Ascending aorta (tissue), 2 donors: ENCODE measurements at regions of chr1 and their contacts with region 1.

Region 1: DNA sequence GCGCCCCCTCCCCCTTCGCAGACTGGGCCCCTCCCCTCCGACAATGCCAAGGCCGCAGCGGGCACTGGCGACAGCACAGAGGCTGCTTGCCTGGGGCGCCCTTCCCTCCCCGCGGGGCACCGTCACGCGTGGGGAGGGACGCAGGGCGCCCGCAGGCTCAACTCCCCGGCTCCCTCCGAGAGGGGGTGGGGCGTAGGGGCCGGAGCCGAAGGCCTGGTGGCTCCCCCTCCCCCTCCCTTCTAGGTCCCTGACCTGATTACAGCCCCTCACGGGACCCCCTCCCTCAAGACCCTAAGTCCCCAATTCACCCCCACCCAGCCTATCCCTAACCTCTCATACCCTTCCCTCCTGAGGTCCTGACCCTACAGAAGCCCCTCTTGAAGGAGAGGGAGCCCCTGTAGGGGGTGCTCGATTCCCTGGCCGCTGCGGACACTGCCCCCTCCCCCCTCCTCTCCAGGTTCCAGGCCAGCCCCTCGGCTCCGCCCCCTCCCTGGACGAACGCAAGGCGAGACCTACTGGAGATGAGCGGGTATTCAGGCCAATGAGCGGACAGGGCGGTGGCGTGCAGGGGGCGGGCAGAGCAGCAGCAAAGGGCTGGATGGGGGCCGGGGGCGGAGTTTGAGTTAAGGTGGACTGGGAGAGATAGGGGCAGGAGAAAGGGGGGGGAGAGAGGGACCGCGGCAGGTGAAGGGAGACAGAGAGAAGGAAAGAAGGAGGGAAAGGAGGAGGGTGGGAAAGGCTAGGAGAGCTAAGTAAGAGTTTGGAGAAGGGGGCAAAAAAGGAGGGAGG is 733 bp upstream of the ZBTB7B start:
- DNase-seq: peak; percentile 99 to 100
- H3K4me3 ChIP-seq: peak overlapping the region; percentile 92 to 94
- H3K27ac ChIP-seq: peak overlapping the region; percentile 97 to 98
- H3K4me1 ChIP-seq: peaks cover 19 to 41% of the 10 kb centered on the region in 2 donors
- H3K27me3 ChIP-seq: no peaks in the 10 kb centered on the region
- CTCF ChIP-seq: peak in 2 of 3 experiments; percentile 50 to 59

Region 2: DNA sequence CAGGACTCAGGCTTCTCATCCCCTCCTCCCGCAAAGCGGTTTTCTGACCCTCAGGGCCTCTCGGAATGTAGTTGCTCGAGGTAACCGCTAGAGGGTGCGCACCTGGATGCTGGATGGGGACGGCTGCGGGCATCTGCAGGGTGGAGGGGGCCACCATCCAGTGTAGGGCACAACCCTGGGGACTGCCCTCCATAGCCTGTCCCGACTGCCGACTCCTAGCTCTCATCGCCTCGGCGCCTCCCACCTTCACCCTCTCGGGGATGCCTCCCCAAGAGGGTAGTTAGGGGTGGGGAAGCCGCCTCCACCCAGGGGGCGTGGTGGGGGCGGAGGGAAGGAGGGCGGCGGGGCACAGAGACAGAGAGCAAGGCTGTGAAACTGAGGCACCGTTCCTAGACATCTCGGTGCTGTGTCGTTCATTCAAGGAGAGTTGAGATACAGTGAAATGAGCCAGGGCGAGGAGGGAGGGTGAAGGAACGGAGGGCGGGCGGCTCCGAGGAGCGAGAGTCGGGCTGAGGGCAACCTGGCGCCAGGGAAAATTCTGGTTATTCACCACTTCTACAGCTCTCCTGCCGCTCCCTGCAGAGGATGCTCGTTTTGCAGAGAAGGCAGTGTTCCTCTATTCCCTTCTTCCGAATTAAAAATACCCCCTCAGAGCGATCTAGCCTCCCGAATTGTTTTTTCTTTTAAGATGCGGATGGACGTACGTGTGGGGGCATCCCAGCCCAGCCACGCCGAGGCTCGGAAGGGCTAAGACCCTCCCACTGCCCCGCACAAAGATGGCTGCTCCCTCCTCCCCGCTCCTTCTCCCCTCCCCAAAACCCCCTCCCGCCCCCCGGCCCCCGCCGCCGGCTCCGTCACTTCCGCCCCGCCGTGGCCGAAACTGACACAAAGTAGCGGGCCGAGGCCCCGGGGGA is 676.9 kb before region 1 on chr1 and contains the start of gene ATP8B2:
- intact Hi-C with region 1: loop called (anchors 5 kb)
- DNase-seq: peak in 1 of 2 donors; percentile 87
- H3K4me3 ChIP-seq: peak within 1 kb of the TSS; percentile 73 to 89
- H3K27ac ChIP-seq: peak within 1 kb of the TSS; percentile 95 to 97
- H3K4me1 ChIP-seq: peaks cover 12 to 24% of the 10 kb centered on the region in 2 donors
- H3K27me3 ChIP-seq: no peaks in the 10 kb centered on the region
- CTCF ChIP-seq: peak; percentile 89 to 96 (median 96)
- total RNA-seq, gene ATP8B2: 173 TPM

Region 3: GRCh38 chr1:154961497-154962262 is 40.2 kb before region 1 on chr1 and contains the start of gene PYGO2:
- intact Hi-C with region 1: loop called (anchors 1 kb)
- DNase-seq: peak in 1 of 2 donors; percentile 90
- H3K4me3 ChIP-seq: peak within 1 kb of the TSS; percentile 97
- H3K27ac ChIP-seq: peak within 1 kb of the TSS; percentile 95 to 97
- H3K4me1 ChIP-seq: peaks cover 3 to 27% of the 10 kb centered on the region in 2 donors
- H3K27me3 ChIP-seq: no peaks in the 10 kb centered on the region
- CTCF ChIP-seq: peak; percentile 45 to 95 (median 52)
- total RNA-seq, gene PYGO2: 48.7 TPM

Region 4: GRCh38 chr1:154982897-154983648 is 18.8 kb before region 1 on chr1 and contains the start of gene FLAD1:
- intact Hi-C with region 1: loop called (anchors 1 kb)
- DNase-seq: peak; percentile 97 to 99
- H3K4me3 ChIP-seq: peak within 1 kb of the TSS; percentile 58 to 84
- H3K27ac ChIP-seq: peak within 1 kb of the TSS; percentile 56 to 59
- H3K4me1 ChIP-seq: peaks cover 7 to 10% of the 10 kb centered on the region in 2 donors
- H3K27me3 ChIP-seq: no peaks in the 10 kb centered on the region
- CTCF ChIP-seq: no peak
- total RNA-seq, gene FLAD1: 31.2 TPM

Region 5: GRCh38 chr1:155050560-155051341 is 48.9 kb after region 1 on chr1 and contains the start of gene ADAM15:
- intact Hi-C with region 1: loop called (anchors 2 kb)
- DNase-seq: peak in 1 of 2 donors; percentile 90
- H3K4me3 ChIP-seq: peak within 1 kb of the TSS; percentile 69 to 80
- H3K27ac ChIP-seq: peak within 1 kb of the TSS; percentile 83 to 86
- H3K4me1 ChIP-seq: peaks cover 0 to 20% of the 10 kb centered on the region in 2 donors
- H3K27me3 ChIP-seq: no peaks in the 10 kb centered on the region
- CTCF ChIP-seq: peak; percentile 87 to 97 (median 88)
- total RNA-seq, gene ADAM15: 610 TPM

Region 6: GRCh38 chr1:155105604-155106022 is 103.7 kb after region 1 on chr1:
- intact Hi-C with region 1: no loop called
- DNase-seq: no peak
- H3K4me3 ChIP-seq: no peak overlapping the region
- H3K27ac ChIP-seq: no peak overlapping the region
- H3K4me1 ChIP-seq: no peaks in the 10 kb centered on the region
- H3K27me3 ChIP-seq: no peaks in the 10 kb centered on the region
- CTCF ChIP-seq: no peak

Region 7: DNA sequence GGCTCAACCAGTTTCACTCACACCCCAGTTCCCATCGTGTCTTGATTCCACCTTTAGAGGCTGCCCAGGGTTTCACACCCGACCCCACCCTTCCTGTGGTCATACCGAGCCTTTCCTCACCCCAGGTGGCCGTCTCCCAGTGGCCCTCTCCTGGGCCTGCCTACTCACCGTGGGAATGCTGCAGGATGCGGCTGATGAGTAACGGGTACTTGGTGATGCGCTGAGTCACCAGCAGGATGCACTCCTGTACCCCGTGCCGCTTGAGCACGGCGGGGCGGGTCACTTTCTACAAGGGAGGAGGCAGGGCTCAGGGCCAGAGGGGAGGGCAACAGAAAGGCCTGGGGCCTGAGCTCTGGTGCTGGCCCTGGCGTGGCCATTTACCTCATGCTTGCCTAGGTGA is 960.1 kb after region 1 on chr1:
- intact Hi-C with region 1: loop called (anchors 5 kb)
- DNase-seq: peak; percentile 79 to 95
- H3K4me3 ChIP-seq: peak overlapping the region in 1 of 2 donors; percentile 9
- H3K27ac ChIP-seq: peak overlapping the region; percentile 89 to 92
- H3K4me1 ChIP-seq: peaks cover 9 to 36% of the 10 kb centered on the region in 2 donors
- H3K27me3 ChIP-seq: no peaks in the 10 kb centered on the region
- CTCF ChIP-seq: peak; percentile 14 to 34 (median 34)